Activated CD4-positive, alpha-beta T cell treated with anti-CD3 and anti-CD28 coated beads for 36 hours (primary cell): ENCODE measurements at regions of chr10 and their contacts with region 1.

Region 1: DNA sequence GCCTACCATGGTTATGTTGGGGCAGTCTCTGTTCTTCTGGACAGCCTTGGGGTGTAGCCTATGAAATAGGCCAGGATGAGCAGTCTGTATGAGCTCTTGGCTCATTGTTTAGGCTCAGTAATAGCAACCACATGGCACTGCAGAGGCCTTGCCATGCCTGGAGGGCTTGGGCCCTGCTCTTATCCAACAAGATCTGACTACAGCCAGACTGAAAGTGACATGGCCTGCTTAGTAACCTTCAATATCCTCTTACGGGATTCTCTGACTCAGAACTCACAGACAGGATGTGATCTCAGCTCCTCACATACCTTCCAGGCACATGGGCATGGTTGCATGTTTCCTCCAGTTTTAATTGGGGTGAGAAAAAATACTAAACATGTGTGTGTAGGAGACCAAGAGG is 289.3 kb downstream of the PTEN start:
- DNase-seq: peak; percentile 75
- ATAC-seq: peak; percentile 100
- H3K4me3 Mint-ChIP-seq: no peak overlapping the region
- H3K27ac Mint-ChIP-seq: peak overlapping the region; percentile 87
- H3K4me1 Mint-ChIP-seq: peaks cover 20% of the 10 kb centered on the region
- H3K27me3 Mint-ChIP-seq: peaks cover 2% of the 10 kb centered on the region

Region 2: GRCh38 chr10:87761892-87762291 is 390.8 kb before region 1 on chr10:
- CTCF ChIA-PET with region 1: no interaction called
- POLR2A ChIA-PET with region 1: no interaction called
- intact Hi-C with region 1: loop called in 1 of 2 experiments (anchors 5 kb)
- DNase-seq: peak; percentile 78
- ATAC-seq: peak; percentile 96
- H3K4me3 Mint-ChIP-seq: no peak overlapping the region
- H3K27ac Mint-ChIP-seq: peak overlapping the region; percentile 78
- H3K4me1 Mint-ChIP-seq: peaks cover 44% of the 10 kb centered on the region
- H3K27me3 Mint-ChIP-seq: no peaks in the 10 kb centered on the region

Region 3: DNA sequence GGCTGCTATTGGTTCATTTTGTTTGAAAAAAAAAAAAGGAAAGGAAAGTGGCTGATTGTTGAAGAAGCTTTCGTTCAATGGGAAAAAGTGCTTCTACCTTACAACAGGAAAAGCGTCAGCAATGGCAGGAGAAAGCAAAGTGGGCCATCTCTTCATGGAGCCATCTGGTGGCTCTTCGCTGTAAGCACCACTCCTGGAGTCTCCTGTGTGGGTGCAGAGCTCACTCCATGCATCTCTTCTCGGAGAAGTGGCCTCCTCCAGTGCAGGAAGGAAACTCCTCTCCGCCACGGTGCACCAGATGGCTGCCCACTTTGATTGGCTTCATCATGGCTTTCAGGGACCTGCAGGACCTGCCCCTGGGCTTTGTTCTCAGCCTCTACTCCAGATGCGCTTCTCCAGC is 38.4 kb before region 1 on chr10:
- CTCF ChIA-PET with region 1: no interaction called
- POLR2A ChIA-PET with region 1: no interaction called
- intact Hi-C with region 1: loop called (anchors 2 kb)
- DNase-seq: peak; percentile 47
- ATAC-seq: no peak
- H3K4me3 Mint-ChIP-seq: no peak overlapping the region
- H3K27ac Mint-ChIP-seq: no peak overlapping the region
- H3K4me1 Mint-ChIP-seq: peaks cover 9% of the 10 kb centered on the region
- H3K27me3 Mint-ChIP-seq: peaks cover 15% of the 10 kb centered on the region

Region 4: DNA sequence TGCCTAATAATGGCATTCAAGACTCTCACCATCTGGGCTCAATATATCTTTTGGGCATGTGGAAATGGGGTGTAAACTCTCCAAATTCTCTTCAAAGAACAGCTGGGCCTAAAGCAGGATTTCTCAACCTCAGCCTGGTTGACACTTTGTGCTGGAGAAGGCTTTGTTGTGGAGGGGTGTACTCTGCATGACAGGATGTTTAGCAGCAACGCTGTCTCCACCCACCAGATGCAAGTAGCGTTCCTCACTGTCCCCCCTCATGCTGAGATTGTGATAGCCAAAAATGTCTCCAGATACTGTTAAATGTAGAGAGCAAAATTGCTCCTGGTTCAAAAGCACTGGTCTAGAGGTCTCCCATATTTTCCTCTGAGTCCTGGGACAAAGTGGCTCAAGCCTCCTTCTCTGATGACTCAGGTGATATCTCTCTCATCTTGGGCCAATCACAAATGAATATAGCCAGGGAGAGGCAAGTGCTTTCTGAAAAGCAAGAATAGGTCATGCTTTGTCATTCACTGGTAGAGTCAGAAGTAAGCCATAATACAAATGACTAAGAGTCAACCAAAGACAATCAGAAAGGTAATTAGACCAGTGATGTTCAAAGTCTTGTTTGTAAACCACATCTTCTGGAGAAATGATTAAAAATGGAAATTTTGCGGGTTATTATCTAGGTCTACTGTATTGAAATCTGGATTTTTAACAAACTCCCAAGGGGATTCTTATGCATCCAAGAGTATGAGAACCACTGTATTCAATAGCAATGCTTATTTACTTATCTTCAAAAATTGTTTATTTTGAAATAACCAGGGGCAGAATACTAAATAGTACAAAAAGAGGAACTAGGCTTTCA is 41.5 kb after region 1 on chr10:
- CTCF ChIA-PET with region 1: no interaction called
- POLR2A ChIA-PET with region 1: no interaction called
- intact Hi-C with region 1: loop called in 1 of 2 experiments (anchors 1 kb)
- DNase-seq: peak; percentile 31
- ATAC-seq: peak; percentile 96
- H3K4me3 Mint-ChIP-seq: no peak overlapping the region
- H3K27ac Mint-ChIP-seq: peak overlapping the region; percentile 27
- H3K4me1 Mint-ChIP-seq: peaks cover 38% of the 10 kb centered on the region
- H3K27me3 Mint-ChIP-seq: no peaks in the 10 kb centered on the region

Region 5: GRCh38 chr10:88270871-88271713 is 118.4 kb after region 1 on chr10:
- CTCF ChIA-PET with region 1: no interaction called
- POLR2A ChIA-PET with region 1: no interaction called
- intact Hi-C with region 1: loop called (anchors 1 to 5 kb)
- DNase-seq: peak; percentile 65
- ATAC-seq: peak; percentile 93
- H3K4me3 Mint-ChIP-seq: no peak overlapping the region
- H3K27ac Mint-ChIP-seq: peak overlapping the region; percentile 64
- H3K4me1 Mint-ChIP-seq: peaks cover 37% of the 10 kb centered on the region
- H3K27me3 Mint-ChIP-seq: peaks cover 3% of the 10 kb centered on the region